Dendritic cell treated with granulocyte-macrophage colony-stimulating factor and Interleukin-4, amounts not matched to agents 40 ng/mL and 50 ng/mL, for 4 days (primary cell): ENCODE measurements at regions of chr19 and their contacts with region 1.

Region 1: DNA sequence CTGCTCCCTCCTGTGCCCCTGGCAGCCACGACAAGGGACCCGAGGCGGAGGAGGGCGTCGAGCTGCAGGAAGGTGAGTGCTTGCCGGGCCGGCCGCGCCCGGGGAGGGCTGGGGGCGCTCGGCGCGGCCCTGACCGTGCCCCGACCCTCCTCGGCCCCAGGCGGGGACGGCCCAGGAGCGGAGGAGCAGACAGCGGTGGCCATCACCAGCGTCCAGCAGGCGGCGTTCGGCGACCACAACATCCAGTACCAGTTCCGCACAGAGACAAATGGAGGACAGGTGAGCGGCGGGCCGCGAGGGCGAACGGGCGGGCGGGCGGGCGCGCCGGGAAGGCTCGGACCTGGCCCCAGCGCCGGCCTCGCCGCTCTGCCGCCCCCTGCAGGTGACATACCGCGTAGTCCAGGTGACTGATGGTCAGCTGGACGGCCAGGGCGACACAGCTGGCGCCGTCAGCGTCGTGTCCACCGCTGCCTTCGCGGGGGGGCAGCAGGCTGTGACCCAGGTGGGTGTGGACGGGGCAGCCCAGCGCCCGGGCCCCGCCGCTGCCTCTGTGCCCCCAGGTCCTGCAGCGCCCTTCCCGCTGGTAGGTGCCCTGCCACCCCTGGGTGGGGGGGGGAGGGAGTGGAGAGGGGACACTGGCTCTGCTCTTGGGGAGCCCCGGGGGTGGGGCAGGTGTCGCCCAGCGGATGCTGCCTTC is 807 bp downstream of the USF2 start:
- H3K4me3 Mint-ChIP-seq: peak overlapping the region; percentile 71
- H3K27ac Mint-ChIP-seq: peak overlapping the region; percentile 69
- H3K4me1 Mint-ChIP-seq: peaks cover 72% of the 10 kb centered on the region
- H3K27me3 Mint-ChIP-seq: no peaks in the 10 kb centered on the region

Region 2: DNA sequence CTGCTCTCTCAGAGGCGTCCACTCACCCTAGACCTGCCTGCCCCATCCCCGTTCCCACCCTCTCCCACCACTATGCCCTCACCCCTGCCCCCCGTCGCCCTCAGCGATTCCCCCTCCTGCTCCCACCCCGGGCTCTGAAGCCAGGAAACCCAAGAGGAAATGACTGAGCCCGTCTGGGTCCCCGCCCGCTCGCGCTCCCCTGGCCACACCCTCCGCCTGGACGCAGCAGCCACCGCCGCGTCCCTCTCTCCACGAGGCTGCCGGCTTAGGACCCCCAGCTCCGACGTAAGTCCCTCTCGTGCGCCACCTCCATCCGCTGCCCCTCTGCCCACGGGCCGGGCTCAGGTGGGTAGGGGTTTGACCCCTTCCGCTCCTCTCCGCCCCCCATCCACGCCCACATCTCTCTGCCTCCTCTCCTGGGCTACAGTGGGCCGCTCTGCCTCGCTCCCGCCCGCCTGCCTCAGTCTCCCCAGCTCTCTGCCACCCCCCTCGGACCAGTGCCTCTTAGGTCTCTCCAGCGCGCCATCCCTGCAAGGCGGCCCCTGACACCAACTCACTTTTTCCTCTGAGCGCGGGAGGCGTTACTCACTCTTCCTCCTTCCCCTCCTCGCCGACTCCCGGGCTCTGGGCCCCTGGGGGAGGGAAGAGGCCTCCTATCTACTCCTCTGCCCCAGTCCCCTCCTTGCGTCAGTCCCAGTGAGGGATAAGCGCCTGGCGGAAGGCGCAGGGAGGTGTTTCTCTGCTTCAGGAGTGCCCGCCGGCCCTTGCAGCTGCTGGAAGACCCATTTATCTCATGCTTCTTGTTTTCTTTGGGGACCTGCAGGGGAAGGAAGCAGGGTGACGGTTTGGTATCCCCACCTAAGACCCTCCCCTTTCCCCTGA is 114.8 kb before region 1 on chr19 and contains the start of gene FXYD5:
- intact Hi-C with region 1: loop called (anchors 5 kb)
- H3K4me3 Mint-ChIP-seq: peak within 1 kb of the TSS; percentile 100
- H3K27ac Mint-ChIP-seq: peak within 1 kb of the TSS; percentile 98
- H3K4me1 Mint-ChIP-seq: peaks cover 62% of the 10 kb centered on the region
- H3K27me3 Mint-ChIP-seq: peaks cover 14% of the 10 kb centered on the region

Region 3: GRCh38 chr19:35213663-35214632 is 55.6 kb before region 1 on chr19:
- intact Hi-C with region 1: loop called (anchors 10 kb)
- H3K4me3 Mint-ChIP-seq: peak overlapping the region; percentile 23
- H3K27ac Mint-ChIP-seq: peak overlapping the region; percentile 76
- H3K4me1 Mint-ChIP-seq: peaks cover 61% of the 10 kb centered on the region
- H3K27me3 Mint-ChIP-seq: no peaks in the 10 kb centered on the region

Region 4: DNA sequence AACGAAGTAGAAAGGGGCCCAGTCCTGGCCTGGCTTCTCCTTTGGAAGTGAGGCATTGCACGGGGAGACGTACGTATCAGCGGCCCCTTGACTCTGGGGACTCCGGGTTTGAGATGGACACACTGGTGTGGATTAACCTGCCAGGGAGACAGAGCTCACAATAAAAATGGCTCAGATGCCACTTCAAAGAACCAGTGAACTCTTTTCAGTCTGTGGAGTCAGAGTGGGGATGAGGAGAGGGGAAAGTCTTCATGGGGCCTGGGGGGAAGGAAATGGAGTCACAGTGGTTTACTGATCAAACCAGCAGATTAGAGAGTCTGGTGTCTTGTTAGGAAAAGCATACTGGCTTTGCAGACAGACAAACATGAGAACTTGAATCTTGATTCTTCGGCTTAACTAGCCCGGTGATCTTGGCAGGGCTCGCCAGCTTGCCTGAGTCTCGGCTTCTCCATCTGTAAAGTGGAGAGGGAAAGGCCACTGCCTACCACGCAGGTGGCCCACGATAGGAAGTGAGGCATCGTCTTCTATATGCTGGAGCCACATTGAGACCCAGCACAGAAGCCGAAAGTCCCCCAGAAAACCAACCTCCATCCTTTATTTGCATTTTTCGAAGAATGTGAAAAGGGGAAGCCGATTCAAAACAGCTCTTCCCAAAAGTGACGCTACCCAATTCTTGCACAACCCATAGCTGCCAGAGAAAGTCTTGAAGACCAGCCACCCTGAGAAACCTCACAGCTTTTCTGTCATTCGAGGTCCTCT is 77.8 kb after region 1 on chr19 and contains the start of gene FFAR1:
- intact Hi-C with region 1: loop called (anchors 5 kb)
- H3K4me3 Mint-ChIP-seq: peak within 1 kb of the TSS; percentile 3
- H3K27ac Mint-ChIP-seq: peak within 1 kb of the TSS; percentile 93
- H3K4me1 Mint-ChIP-seq: peaks cover 57% of the 10 kb centered on the region
- H3K27me3 Mint-ChIP-seq: peaks cover 55% of the 10 kb centered on the region

Region 5: GRCh38 chr19:35357867-35358573 is 88.5 kb after region 1 on chr19 and contains the start of gene FFAR3:
- intact Hi-C with region 1: no loop called
- H3K4me3 Mint-ChIP-seq: peak within 1 kb of the TSS; percentile 39
- H3K27ac Mint-ChIP-seq: peak within 1 kb of the TSS; percentile 60
- H3K4me1 Mint-ChIP-seq: peaks cover 28% of the 10 kb centered on the region
- H3K27me3 Mint-ChIP-seq: peaks cover 4% of the 10 kb centered on the region

Region 6: GRCh38 chr19:35495107-35496064 is 225.8 kb after region 1 on chr19:
- intact Hi-C with region 1: loop called (anchors 1 kb)
- H3K4me3 Mint-ChIP-seq: no peak overlapping the region
- H3K27ac Mint-ChIP-seq: no peak overlapping the region
- H3K4me1 Mint-ChIP-seq: peaks cover 8% of the 10 kb centered on the region
- H3K27me3 Mint-ChIP-seq: peaks cover 46% of the 10 kb centered on the region